CD14-positive monocyte (primary cell): ENCODE measurements at regions of chr11 and their contacts with region 1.

Region 1: DNA sequence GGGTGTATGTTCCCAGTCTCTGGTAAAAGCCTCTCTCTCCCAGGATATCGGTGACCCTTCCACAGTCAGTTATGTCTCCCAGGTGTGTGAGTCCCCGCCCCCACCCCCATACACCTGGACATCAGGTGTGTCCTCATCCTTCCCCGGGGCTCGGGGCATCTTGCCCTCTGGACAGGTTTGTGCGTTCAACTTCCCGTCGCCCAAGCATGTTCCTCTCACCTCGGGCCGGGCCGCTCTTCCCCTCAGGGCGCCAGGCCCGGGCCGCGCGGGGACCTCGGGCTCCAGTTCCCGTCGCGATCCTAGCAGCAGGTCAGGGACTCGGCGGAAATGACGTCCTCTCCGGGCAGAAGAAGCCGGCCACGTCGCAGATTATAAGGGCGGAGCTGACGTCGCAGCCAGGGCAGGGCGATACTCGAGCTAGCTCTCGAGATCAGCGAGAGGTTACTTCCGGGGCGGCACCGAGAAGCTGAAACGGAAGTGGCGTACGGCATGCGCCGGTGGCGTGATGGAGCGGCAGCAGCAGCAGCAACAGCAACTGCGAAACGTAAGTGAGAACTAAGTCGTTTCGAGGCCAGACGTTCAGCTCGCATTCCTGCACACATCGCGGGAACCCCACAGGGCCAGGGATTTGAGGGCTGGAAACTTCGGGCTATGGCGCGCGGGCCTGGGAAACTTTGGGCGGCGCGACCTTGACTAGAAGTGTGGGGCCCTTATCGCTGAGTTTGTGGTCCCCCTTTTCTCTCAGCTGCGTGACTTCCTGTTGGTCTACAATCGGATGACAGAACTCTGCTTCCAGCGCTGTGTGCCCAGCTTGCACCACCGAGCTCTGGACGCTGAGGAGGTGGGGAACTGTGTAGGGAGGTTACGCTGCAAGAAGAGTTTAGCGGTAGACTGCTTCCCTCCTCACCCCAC is at the starts of genes ARFIP2 and TIMM10B:
- DNase-seq: peak; percentile 99 to 100 (median 99)
- H3K4me3 ChIP-seq: peak within 1 kb of the TSS; percentile 56 to 78 (median 64)
- H3K4me3 Mint-ChIP-seq: peak within 1 kb of the TSS; percentile 82 to 91
- H3K27ac ChIP-seq: peak within 1 kb of the TSS; percentile 97 to 98
- H3K27ac Mint-ChIP-seq: peak within 1 kb of the TSS; percentile 96 to 99 (median 98)
- H3K4me1 ChIP-seq: peaks cover 22 to 25% of the 10 kb centered on the region in 2 donors
- H3K4me1 Mint-ChIP-seq: peaks cover 31% of the 10 kb centered on the region
- H3K27me3 ChIP-seq: no peaks in the 10 kb centered on the region
- H3K27me3 Mint-ChIP-seq: peaks cover 0 to 2% (median 0%) of the 10 kb centered on the region in 3 donors
- CTCF ChIP-seq: no peak
- polyA plus RNA-seq, gene ARFIP2: 21.6 to 43.8 (median 27.2) TPM
- polyA plus RNA-seq, gene TIMM10B: 20.0 to 34.9 (median 22.1) TPM

Region 2: DNA sequence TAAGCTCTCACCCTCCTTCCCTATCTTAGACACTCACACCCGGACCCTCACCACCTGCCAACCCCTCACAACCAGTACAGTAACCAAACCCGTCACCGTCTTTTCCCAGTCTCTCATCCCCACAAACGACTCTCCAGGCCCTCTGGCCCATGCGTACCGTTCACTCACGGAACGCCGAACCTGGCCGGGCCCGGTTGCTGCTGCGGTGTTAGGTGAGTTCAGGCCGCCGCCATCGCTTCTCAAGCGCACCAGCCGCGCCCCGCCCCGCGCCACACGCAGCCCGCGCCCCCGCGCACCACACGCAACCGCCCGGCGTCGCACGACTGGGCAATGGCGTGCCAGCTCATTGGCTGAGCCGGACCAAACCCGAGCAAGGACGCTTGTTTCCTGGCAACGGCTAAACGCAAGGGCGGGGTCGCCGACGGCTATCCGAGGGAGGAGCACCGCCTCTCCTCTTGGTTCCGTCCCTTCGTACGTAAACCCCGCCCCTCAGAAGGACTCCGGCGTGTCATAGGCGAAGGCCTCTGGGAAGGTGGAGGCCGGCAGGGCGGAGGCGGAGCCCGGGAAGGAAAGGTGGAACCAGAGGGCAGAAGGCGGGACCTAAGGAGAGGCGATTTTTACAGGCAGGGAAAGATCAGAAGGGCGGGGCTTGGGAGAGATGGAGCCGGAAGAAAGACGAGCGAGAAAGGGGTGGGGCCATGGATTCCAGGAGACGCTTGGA is 246.7 kb before region 1 on chr11 and contains the start of gene FHIP1B:
- intact Hi-C with region 1: loop called in 1 of 2 experiments (anchors 5 kb)
- DNase-seq: peak; percentile 99 to 100 (median 100)
- H3K4me3 ChIP-seq: peak within 1 kb of the TSS; percentile 81 to 94 (median 87)
- H3K4me3 Mint-ChIP-seq: peak within 1 kb of the TSS; percentile 97 to 100
- H3K27ac ChIP-seq: peak within 1 kb of the TSS; percentile 84 to 97
- H3K27ac Mint-ChIP-seq: peak within 1 kb of the TSS; percentile 98 to 100 (median 98)
- H3K4me1 ChIP-seq: peaks cover 49 to 72% of the 10 kb centered on the region in 2 donors
- H3K4me1 Mint-ChIP-seq: peaks cover 48% of the 10 kb centered on the region
- H3K27me3 ChIP-seq: no peaks in the 10 kb centered on the region
- H3K27me3 Mint-ChIP-seq: peaks cover 0 to 1% (median 0%) of the 10 kb centered on the region in 3 donors
- CTCF ChIP-seq: no peak
- polyA plus RNA-seq, gene FHIP1B: 14.2 to 64.1 (median 18.9) TPM

Region 3: GRCh38 chr11:6389921-6390724 is 91.1 kb before region 1 on chr11 and contains the start of gene SMPD1:
- intact Hi-C with region 1: loop called (anchors 2 to 5 kb)
- DNase-seq: peak; percentile 92 to 94 (median 93)
- H3K4me3 ChIP-seq: peak within 1 kb of the TSS; percentile 62 to 91 (median 70)
- H3K4me3 Mint-ChIP-seq: peak within 1 kb of the TSS; percentile 87 to 97
- H3K27ac ChIP-seq: peak within 1 kb of the TSS; percentile 76 to 93
- H3K27ac Mint-ChIP-seq: peak within 1 kb of the TSS; percentile 94 to 99 (median 97)
- H3K4me1 ChIP-seq: peaks cover 15 to 19% of the 10 kb centered on the region in 2 donors
- H3K4me1 Mint-ChIP-seq: peaks cover 34% of the 10 kb centered on the region
- H3K27me3 ChIP-seq: no peaks in the 10 kb centered on the region
- H3K27me3 Mint-ChIP-seq: peaks cover 0 to 2% (median 0%) of the 10 kb centered on the region in 3 donors
- CTCF ChIP-seq: no peak
- polyA plus RNA-seq, gene SMPD1: 4.2 to 22.6 (median 4.9) TPM

Region 4: GRCh38 chr11:6587360-6587953 is 106.2 kb after region 1 on chr11:
- intact Hi-C with region 1: no loop called
- DNase-seq: no peak
- H3K4me3 ChIP-seq: no peak overlapping the region
- H3K4me3 Mint-ChIP-seq: no peak overlapping the region
- H3K27ac ChIP-seq: no peak overlapping the region
- H3K27ac Mint-ChIP-seq: no peak overlapping the region
- H3K4me1 ChIP-seq: no peaks in the 10 kb centered on the region
- H3K4me1 Mint-ChIP-seq: no peaks in the 10 kb centered on the region
- H3K27me3 ChIP-seq: no peaks in the 10 kb centered on the region
- H3K27me3 Mint-ChIP-seq: no peaks in the 10 kb centered on the region
- CTCF ChIP-seq: no peak

Region 5: GRCh38 chr11:6682936-6683861 is 201.9 kb after region 1 on chr11 and contains the start of gene MRPL17:
- intact Hi-C with region 1: loop called in 1 of 2 experiments (anchors 2 kb)
- DNase-seq: peak; percentile 99
- H3K4me3 ChIP-seq: peak within 1 kb of the TSS; percentile 64 to 96 (median 95)
- H3K4me3 Mint-ChIP-seq: peak within 1 kb of the TSS; percentile 97 to 99
- H3K27ac ChIP-seq: peak within 1 kb of the TSS; percentile 85 to 93
- H3K27ac Mint-ChIP-seq: peak within 1 kb of the TSS; percentile 88 to 99 (median 98)
- H3K4me1 ChIP-seq: peaks cover 16 to 19% of the 10 kb centered on the region in 2 donors
- H3K4me1 Mint-ChIP-seq: peaks cover 18% of the 10 kb centered on the region
- H3K27me3 ChIP-seq: no peaks in the 10 kb centered on the region
- H3K27me3 Mint-ChIP-seq: peaks cover 1 to 6% (median 6%) of the 10 kb centered on the region in 3 donors
- CTCF ChIP-seq: peak; percentile 83
- polyA plus RNA-seq, gene MRPL17: 8.0 to 14.0 (median 12.8) TPM